ENCODE measurements at regions of chr2 and their contacts with region 1.

Region 1: DNA sequence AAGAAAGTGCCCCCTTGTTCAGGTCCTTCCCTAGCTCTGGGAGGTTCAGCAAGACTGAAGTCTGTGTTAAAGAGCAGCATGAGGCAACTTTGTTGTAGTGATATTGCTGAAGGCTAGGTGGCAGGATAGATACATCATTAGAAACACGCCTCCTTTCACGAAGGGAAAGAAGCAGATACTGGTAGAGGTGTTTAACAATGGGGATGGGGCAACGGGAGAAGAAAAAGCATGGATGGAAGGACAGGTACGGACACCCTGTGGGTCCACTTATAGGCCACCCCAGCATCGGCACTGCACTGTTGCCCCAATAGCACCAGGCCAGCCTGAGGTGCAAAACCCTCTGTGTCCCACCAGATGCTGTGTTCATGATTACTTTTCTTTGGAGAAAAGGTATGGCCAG is 3.5 kb upstream of the IGFBP5 start:
- DNase-seq: peak in 1 of 10 donors; percentile 30
- H3K4me3 ChIP-seq: peak overlapping the region in 1 of 59 donors; percentile 21
- H3K27ac ChIP-seq: peak overlapping the region in 2 of 59 donors; percentile 36 to 41
- H3K27me3 ChIP-seq: peaks cover 0 to 12% (median 0%) of the 10 kb centered on the region in 45 donors
- CTCF ChIP-seq: peak in 55 of 56 donors; percentile 23 to 80 (median 68)

Region 2: GRCh38 chr2:216274194-216274840 is 424.6 kb before region 1 on chr2:
- intact Hi-C with region 1: no loop called
- DNase-seq: peak in 2 of 10 donors; percentile 10 to 46
- H3K4me3 ChIP-seq: no peak overlapping the region
- H3K27ac ChIP-seq: peak overlapping the region in 2 of 59 donors; percentile 1 to 44
- H3K27me3 ChIP-seq: peaks cover 0 to 12% (median 0%) of the 10 kb centered on the region in 45 donors
- CTCF ChIP-seq: peak in 8 of 56 donors; percentile 8 to 35 (median 21)

Region 3: DNA sequence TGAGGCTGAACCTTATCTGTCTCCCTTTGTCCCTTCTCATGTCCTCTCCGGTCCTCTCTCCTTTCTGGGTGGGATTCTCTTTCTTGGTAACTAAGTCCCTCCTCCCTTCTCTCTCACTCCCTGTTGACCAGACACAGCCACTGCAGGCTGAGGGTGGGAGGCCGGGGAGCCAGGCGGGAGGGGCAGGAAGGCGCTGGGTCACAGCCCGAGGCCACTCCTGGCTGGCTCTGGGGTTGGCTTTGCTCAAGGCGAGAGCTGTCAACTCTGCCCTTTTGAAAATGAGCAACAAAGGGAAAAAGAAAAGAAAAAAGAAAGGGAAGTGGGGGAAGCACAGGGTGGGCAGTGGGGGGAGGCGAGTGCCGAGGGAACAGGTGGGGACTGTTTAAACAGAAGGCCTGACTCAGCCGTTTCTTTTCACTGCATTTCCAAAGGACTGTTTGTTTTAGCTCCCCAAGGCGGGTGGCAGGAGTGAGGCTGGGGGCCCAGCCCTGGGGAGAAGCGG is 66.9 kb after region 1 on chr2:
- intact Hi-C with region 1: no loop called
- DNase-seq: no peak
- H3K4me3 ChIP-seq: no peak overlapping the region
- H3K27ac ChIP-seq: no peak overlapping the region
- H3K27me3 ChIP-seq: peaks cover 0 to 4% (median 0%) of the 10 kb centered on the region in 45 donors
- CTCF ChIP-seq: no peak

Region 4: GRCh38 chr2:216849987-216850386 is 151.1 kb after region 1 on chr2:
- intact Hi-C with region 1: loop called in 1 of 2 experiments (anchors 10 kb)
- DNase-seq: peak in 9 of 10 donors; percentile 51 to 84 (median 73)
- H3K4me3 ChIP-seq: peak overlapping the region in 18 of 59 donors; percentile 0 to 32 (median 19)
- H3K27ac ChIP-seq: peak overlapping the region in 41 of 59 donors; percentile 4 to 88 (median 62)
- H3K27me3 ChIP-seq: no peaks in the 10 kb centered on the region
- CTCF ChIP-seq: peak in 1 of 56 donors; percentile 26

Region 5: GRCh38 chr2:217510771-217511291 is 811.9 kb after region 1 on chr2:
- intact Hi-C with region 1: loop called (anchors 2 to 5 kb)
- DNase-seq: peak in 8 of 10 donors; percentile 26 to 78 (median 50)
- H3K4me3 ChIP-seq: peak overlapping the region in 11 of 59 donors; percentile 0 to 46 (median 24)
- H3K27ac ChIP-seq: peak overlapping the region in 1 of 59 donors; percentile 11
- H3K27me3 ChIP-seq: no peaks in the 10 kb centered on the region
- CTCF ChIP-seq: peak; percentile 44 to 90 (median 78)

Region 6: DNA sequence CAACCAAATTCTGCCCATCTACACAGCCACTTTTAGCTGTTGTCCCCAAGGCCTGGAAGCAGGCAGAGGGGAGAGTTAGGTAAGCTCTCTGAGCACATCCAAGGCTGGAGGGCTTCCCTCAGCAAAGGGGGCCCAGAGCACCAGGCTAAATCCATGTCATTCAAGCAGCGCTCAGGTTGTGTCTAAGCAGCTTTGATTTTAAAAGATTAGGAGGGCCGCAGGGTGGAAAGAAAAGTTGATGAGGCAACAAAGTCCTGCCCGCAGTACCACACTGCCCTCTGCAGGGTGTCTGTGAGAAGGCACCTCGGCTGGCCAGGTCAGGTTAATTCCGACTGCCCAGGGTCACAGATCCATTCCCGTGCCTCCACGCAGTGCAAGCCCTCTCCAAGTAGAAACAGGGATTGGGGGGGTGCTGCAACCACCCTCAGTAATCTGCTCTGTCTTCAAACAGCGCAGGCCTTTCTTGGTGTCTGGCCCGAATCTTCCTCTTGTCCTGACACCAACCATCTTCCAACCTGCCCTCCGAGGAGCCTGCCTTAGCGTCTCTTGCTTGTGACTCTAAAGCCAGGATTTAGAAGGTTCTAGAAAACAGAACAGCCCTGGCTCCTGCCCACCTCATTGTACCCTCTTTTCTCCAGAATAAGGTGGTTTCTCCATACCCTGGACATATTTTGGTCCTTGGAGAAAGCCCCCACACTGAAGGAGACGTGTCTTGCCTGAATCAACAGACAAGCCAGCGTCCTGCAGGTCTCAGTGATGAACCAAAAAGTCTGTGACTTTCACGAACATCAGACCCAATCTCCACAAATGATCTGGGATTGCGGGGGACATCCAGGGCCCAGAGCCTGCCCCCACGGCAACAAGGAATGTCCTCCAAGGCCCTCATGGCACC is 1014.7 kb after region 1 on chr2:
- intact Hi-C with region 1: loop called (anchors 2 kb)
- DNase-seq: peak; percentile 78 to 88 (median 84)
- H3K4me3 ChIP-seq: peak overlapping the region in 12 of 59 donors; percentile 3 to 45 (median 26)
- H3K27ac ChIP-seq: peak overlapping the region; percentile 68 to 98 (median 93)
- H3K27me3 ChIP-seq: no peaks in the 10 kb centered on the region
- CTCF ChIP-seq: peak; percentile 89 to 99 (median 97)

Measured in dorsolateral prefrontal cortex (tissue), 120 donors.